ENCODE measurements at regions of chr14 and their contacts with region 1.

Region 1: DNA sequence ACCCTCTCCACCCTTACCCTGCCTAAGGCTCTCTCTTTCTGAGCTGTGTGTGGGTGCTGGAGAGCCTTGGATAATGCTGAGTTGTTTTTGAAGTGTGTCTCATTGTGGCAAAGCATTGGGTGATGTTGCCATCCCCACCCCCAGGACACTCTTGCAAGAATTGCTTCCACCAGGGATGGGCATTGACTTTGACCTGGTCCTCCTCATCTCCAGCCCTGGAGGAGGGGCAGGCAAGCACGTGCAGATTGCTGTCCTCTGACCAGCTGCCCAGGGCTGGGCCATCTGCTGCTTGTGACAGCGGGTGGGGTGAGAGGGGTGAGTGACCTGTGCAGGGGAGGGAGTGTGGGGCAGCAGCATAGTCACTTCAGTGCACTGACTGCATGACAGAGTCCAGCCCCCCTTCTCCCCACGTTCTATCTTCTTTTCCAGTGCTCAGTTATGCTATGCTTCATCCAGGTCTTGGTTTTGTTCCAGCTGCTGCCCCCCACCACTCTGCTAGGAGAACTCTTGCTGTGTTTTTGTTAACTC is 26.2 kb downstream of the SUSD6 start:
- DNase-seq: no peak
- ATAC-seq: peak; percentile 21
- H3K4me3 ChIP-seq: no peak overlapping the region
- H3K4me3 Mint-ChIP-seq: peak overlapping the region; percentile 55 to 83 (median 72)
- H3K27ac ChIP-seq: peak overlapping the region; percentile 24
- H3K27ac Mint-ChIP-seq: peak overlapping the region; percentile 47 to 94 (median 80)
- H3K4me1 ChIP-seq: peaks cover 42 to 60% of the 10 kb centered on the region in 2 donors
- H3K4me1 Mint-ChIP-seq: peaks cover 68 to 93% (median 81%) of the 10 kb centered on the region in 7 donors
- H3K27me3 ChIP-seq: no peaks in the 10 kb centered on the region
- H3K27me3 Mint-ChIP-seq: no peaks in the 10 kb centered on the region

Region 2: GRCh38 chr14:69600304-69600891 is 37.2 kb before region 1 on chr14:
- CTCF ChIA-PET with region 1: interaction called, 4 read pairs
- POLR2A ChIA-PET with region 1: interaction called, 4 read pairs
- intact Hi-C with region 1: loop called (anchors 5 kb)
- DNase-seq: no peak
- ATAC-seq: no peak
- H3K4me3 ChIP-seq: no peak overlapping the region
- H3K4me3 Mint-ChIP-seq: no peak overlapping the region
- H3K27ac ChIP-seq: no peak overlapping the region
- H3K27ac Mint-ChIP-seq: no peak overlapping the region
- H3K4me1 ChIP-seq: no peaks in the 10 kb centered on the region
- H3K4me1 Mint-ChIP-seq: peaks cover 0 to 11% (median 4%) of the 10 kb centered on the region in 7 donors
- H3K27me3 ChIP-seq: no peaks in the 10 kb centered on the region
- H3K27me3 Mint-ChIP-seq: peaks cover 0 to 5% (median 0%) of the 10 kb centered on the region in 5 donors

Region 3: GRCh38 chr14:69648477-69649451 is 11.2 kb after region 1 on chr14:
- CTCF ChIA-PET with region 1: interaction called, 3 read pairs
- POLR2A ChIA-PET with region 1: interaction called, 8 read pairs
- intact Hi-C with region 1: loop called (anchors 1 kb)
- DNase-seq: no peak
- ATAC-seq: no peak
- H3K4me3 ChIP-seq: no peak overlapping the region
- H3K4me3 Mint-ChIP-seq: peak overlapping the region in 9 of 10 donors; percentile 7 to 57 (median 40)
- H3K27ac ChIP-seq: no peak overlapping the region
- H3K27ac Mint-ChIP-seq: peak overlapping the region in 8 of 9 donors; percentile 10 to 71 (median 44)
- H3K4me1 ChIP-seq: peaks cover 24 to 45% of the 10 kb centered on the region in 2 donors
- H3K4me1 Mint-ChIP-seq: peaks cover 85 to 94% (median 91%) of the 10 kb centered on the region in 7 donors
- H3K27me3 ChIP-seq: no peaks in the 10 kb centered on the region
- H3K27me3 Mint-ChIP-seq: no peaks in the 10 kb centered on the region

Region 4: GRCh38 chr14:69972755-69973154 is 335.2 kb after region 1 on chr14:
- CTCF ChIA-PET with region 1: no interaction called
- POLR2A ChIA-PET with region 1: no interaction called
- intact Hi-C with region 1: no loop called
- DNase-seq: no peak
- ATAC-seq: no peak
- H3K4me3 ChIP-seq: no peak overlapping the region
- H3K4me3 Mint-ChIP-seq: no peak overlapping the region
- H3K27ac ChIP-seq: no peak overlapping the region
- H3K27ac Mint-ChIP-seq: no peak overlapping the region
- H3K4me1 ChIP-seq: no peaks in the 10 kb centered on the region
- H3K4me1 Mint-ChIP-seq: peaks cover 0 to 1% (median 0%) of the 10 kb centered on the region in 7 donors
- H3K27me3 ChIP-seq: no peaks in the 10 kb centered on the region
- H3K27me3 Mint-ChIP-seq: peaks cover 15 to 29% (median 19%) of the 10 kb centered on the region in 5 donors